ENCODE measurements at regions of chr13 and their contacts with region 1.

Region 1: GRCh38 chr13:45280751-45281634 is 60.0 kb downstream of the TPT1 start:
- DNase-seq: peak; percentile 56 to 77
- H3K4me3 ChIP-seq: no peak overlapping the region
- H3K4me3 Mint-ChIP-seq: no peak overlapping the region
- H3K27ac Mint-ChIP-seq: no peak overlapping the region
- H3K4me1 ChIP-seq: no peaks in the 10 kb centered on the region
- H3K4me1 Mint-ChIP-seq: peaks cover 8% of the 10 kb centered on the region
- H3K27me3 ChIP-seq: no peaks in the 10 kb centered on the region
- H3K27me3 Mint-ChIP-seq: no peaks in the 10 kb centered on the region
- CTCF ChIP-seq: peak; percentile 57 to 87

Region 2: GRCh38 chr13:45162821-45163220 is 118.2 kb before region 1 on chr13:
- CTCF ChIA-PET with region 1: no interaction called
- POLR2A ChIA-PET with region 1: no interaction called
- intact Hi-C with region 1: no loop called
- DNase-seq: no peak
- H3K4me3 ChIP-seq: no peak overlapping the region
- H3K4me3 Mint-ChIP-seq: no peak overlapping the region
- H3K27ac Mint-ChIP-seq: no peak overlapping the region
- H3K4me1 ChIP-seq: no peaks in the 10 kb centered on the region
- H3K4me1 Mint-ChIP-seq: no peaks in the 10 kb centered on the region
- H3K27me3 ChIP-seq: no peaks in the 10 kb centered on the region
- H3K27me3 Mint-ChIP-seq: no peaks in the 10 kb centered on the region
- CTCF ChIP-seq: no peak

Region 3: DNA sequence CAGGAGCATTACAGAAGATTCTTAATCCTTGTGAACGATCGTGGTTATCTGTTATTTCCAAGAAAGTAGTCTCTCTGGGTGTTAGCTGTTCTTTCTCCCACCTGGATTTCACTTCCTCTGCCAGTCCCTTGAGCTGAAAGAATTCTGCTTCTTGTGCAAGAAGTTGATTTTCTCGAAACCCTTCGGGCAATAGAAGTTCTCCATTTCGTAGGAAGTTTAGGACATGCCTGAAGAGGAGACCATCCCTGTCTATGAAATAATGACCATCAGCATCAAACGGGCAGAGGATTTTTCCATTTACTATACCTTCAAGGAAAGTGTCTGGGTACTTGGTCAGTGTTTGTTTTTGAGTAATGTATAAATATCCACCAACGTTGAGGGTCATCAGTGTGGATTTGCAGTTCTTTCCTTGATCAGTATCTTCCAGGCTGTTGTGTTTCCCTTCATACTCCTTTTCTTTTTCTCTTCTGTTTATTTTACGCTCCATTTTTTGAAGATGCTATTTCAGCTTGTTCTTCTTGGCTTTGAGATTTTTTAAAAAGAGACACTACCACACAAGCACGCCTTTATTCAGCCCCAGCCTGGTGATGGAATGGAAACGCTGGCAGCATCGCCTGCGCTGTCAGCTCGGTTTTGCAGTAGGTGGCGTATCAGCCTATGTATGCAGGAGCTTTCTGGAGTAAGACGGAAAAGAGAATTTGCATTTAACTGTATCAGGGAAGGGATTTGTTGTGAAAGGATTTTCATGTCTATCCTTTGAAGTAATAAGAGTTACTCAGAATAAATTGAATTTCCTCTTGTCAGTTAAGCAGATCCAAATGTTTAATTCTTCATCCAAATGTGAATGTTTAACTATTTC is 86.7 kb before region 1 on chr13:
- CTCF ChIA-PET with region 1: interaction called, 8 read pairs
- POLR2A ChIA-PET with region 1: no interaction called
- intact Hi-C with region 1: loop called (anchors 1 kb)
- DNase-seq: peak in 1 of 2 experiments; percentile 43
- H3K4me3 ChIP-seq: no peak overlapping the region
- H3K4me3 Mint-ChIP-seq: no peak overlapping the region
- H3K27ac Mint-ChIP-seq: no peak overlapping the region
- H3K4me1 ChIP-seq: peaks cover 16% of the 10 kb centered on the region
- H3K4me1 Mint-ChIP-seq: no peaks in the 10 kb centered on the region
- H3K27me3 ChIP-seq: no peaks in the 10 kb centered on the region
- H3K27me3 Mint-ChIP-seq: no peaks in the 10 kb centered on the region
- CTCF ChIP-seq: peak in 1 of 2 experiments; percentile 34

Region 4: DNA sequence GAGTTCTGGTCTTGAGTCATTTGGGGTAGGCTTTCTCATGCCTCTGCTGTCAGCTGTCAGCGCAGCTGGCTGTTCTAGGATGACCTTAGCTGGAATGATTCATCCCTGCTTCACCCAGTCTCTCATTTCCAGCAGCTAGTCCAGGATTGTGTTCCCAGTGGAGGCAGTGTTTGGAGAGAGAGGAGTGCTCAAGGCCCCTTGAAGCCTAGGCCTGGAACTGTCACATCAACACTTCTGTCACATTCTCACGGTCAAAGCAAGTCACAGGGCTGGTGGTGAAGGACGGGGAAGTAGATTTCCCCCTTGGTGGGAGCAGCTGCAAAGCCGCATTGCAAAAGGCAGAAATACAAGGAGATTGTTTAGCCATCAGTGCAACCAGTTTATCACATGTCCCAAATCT is 44.8 kb after region 1 on chr13:
- CTCF ChIA-PET with region 1: no interaction called
- POLR2A ChIA-PET with region 1: no interaction called
- intact Hi-C with region 1: no loop called
- DNase-seq: no peak
- H3K4me3 ChIP-seq: no peak overlapping the region
- H3K4me3 Mint-ChIP-seq: no peak overlapping the region
- H3K27ac Mint-ChIP-seq: peak overlapping the region; percentile 26
- H3K4me1 ChIP-seq: peaks cover 5% of the 10 kb centered on the region; the same call in 1 of the 2 replicates
- H3K4me1 Mint-ChIP-seq: peaks cover under 1% of the 10 kb centered on the region
- H3K27me3 ChIP-seq: no peaks in the 10 kb centered on the region
- H3K27me3 Mint-ChIP-seq: peaks cover 4% of the 10 kb centered on the region
- CTCF ChIP-seq: no peak

Measured in Caco-2 (cell line).